Activated T-helper 2 cell treated with anti-CD3 and anti-CD28 coated beads, Interferon-gamma antibody, Interleukin-2, Interleukin-4, amounts not matched to agents 10 μg/mL and 5 μg/mL and 100 μg/mL, durations not matched to agents 14 hours and 24 hours and 36 hours (primary cell): ENCODE measurements at regions of chr14 and their contacts with region 1.

Region 1: DNA sequence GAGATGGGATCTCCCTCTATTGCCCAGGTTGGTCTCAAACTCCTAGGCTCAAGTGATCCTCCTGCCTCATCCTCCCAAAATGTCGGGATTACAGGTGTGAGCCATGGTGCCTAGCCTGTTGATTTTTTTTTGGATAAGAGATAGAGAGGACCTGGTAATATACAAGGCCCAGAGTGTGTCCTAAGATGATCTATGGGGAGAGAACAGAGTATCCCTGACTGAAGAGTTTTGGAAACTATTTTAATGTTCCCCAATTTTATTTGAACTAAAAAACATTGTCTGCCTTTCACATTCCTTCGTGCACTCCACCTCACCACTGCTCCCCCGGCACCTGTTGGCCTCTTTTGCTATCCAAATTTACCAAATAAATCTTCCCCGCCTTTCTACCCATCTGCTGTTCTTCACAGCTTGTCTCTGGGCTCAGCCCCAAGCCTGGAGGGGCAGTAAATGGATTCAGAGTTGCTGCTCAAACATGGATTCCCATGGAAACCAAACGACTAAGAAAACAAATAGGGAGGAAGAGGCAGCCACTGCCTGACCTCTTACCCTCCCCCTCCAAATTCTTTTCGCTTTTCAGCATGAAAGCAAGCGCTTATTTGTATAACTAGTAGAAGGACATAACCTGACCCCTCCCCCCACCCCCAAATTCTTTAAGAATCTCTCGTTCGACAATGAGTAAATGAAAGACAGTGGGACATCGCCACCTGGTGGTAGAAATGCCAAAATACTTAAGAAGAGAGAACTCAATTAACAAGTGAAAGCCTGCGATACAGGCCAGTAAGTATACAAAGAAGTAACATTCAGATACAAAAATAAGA is 22.6 kb downstream of the OR10G3 start:
- DNase-seq: peak; percentile 55
- H3K4me3 Mint-ChIP-seq: no peak overlapping the region
- H3K27ac Mint-ChIP-seq: peak overlapping the region; percentile 19
- H3K4me1 Mint-ChIP-seq: peaks cover 4% of the 10 kb centered on the region
- H3K27me3 Mint-ChIP-seq: no peaks in the 10 kb centered on the region

Region 2: GRCh38 chr14:21498553-21499526 is 58.5 kb before region 1 on chr14:
- intact Hi-C with region 1: loop called (anchors 1 kb)
- DNase-seq: no peak
- H3K4me3 Mint-ChIP-seq: no peak overlapping the region
- H3K27ac Mint-ChIP-seq: peak overlapping the region; percentile 2
- H3K4me1 Mint-ChIP-seq: peaks cover 21% of the 10 kb centered on the region
- H3K27me3 Mint-ChIP-seq: no peaks in the 10 kb centered on the region